GM10248 (cell line): ENCODE measurements at regions of chr21 and their contacts with region 1.

Region 1: DNA sequence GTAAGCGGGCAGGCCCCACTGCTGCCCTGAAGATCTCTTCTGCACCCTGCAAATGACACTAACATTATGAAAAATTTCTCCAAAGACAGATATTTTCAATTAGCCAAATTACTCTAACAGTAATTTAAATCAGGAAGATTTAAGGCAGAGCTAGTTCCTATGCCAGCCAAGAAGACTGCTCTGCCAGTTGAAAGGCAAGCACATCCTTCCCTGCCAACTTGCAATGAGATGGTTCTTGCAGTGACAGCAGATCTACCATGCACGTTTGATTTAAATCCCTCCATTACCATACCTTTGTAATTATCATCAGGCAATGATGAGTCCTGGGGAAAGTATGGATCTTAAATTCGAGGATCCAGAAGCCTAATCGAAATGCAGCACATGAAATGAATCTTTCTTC is 76.5 kb downstream of the SAMSN1 start:
- DNase-seq: no peak
- CTCF ChIP-seq: no peak

Region 2: DNA sequence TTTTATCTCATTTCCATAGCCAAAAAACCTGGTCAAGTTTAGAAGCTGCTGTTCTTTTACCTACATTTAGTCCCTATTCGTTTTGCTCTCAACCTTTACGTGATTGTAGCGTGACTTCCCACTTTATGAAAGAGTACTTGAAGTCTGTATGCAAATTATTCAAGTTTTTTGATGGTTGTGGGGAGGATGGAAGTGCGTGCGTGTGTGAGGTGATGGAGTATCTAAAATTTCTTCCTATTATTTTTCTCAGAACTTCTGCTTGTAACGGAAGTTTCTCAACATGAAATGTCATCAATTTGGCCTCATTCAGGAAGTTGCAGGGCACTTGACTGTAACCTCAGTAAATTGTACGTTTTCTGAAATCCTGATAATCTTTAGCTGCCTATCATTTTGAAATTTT is 12.5 kb after region 1 on chr21:
- CTCF ChIA-PET with region 1: interaction called, 12 read pairs
- POLR2A ChIA-PET with region 1: interaction called, 3 read pairs
- DNase-seq: no peak
- CTCF ChIP-seq: no peak

Region 3: DNA sequence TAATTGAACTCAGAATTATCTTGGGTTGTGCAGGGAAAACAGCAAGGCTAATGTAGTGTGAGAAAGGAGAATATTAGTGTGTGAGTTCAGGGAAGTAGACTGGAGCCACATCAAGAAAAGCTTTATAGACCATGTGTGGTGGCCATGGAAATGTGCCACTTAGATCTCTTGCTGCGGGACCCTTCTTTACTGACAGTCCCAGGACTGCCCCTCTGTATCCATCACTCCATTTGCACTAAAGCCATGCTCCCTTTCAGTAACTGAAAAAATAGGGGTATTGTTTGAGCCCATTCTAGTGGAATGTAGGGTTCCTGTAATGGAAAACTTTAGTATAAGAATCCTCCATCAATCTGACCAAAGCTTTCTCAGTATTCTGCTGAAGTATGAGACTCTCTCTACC is 44.2 kb after region 1 on chr21:
- CTCF ChIA-PET with region 1: no interaction called
- POLR2A ChIA-PET with region 1: no interaction called
- DNase-seq: no peak
- CTCF ChIP-seq: no peak

Region 4: GRCh38 chr21:15112858-15113257 is 643.2 kb after region 1 on chr21:
- CTCF ChIA-PET with region 1: no interaction called
- POLR2A ChIA-PET with region 1: no interaction called
- DNase-seq: no peak
- CTCF ChIP-seq: no peak